Endothelial cell of umbilical vein (primary cell): ENCODE measurements at regions of chr11 and their contacts with region 1.

Region 1: GRCh38 chr11:13685461-13686108 is 17.1 kb downstream of the FAR1 start:
- DNase-seq: peak; percentile 81
- H3K4me3 ChIP-seq: peak overlapping the region in 1 of 3 experiments; percentile 1
- H3K27ac ChIP-seq: peak overlapping the region; percentile 27
- H3K4me1 ChIP-seq: peaks cover 43% of the 10 kb centered on the region
- H3K27me3 ChIP-seq: no peaks in the 10 kb centered on the region
- CTCF ChIP-seq: no peak
- POLR2A ChIP-seq: no peak

Region 2: GRCh38 chr11:13717331-13717730 is 31.7 kb after region 1 on chr11:
- CTCF ChIA-PET with region 1: interaction called, 3 read pairs
- POLR2A ChIA-PET with region 1: no interaction called
- dilution Hi-C with region 1: no loop called
- intact Hi-C with region 1: loop called (anchors 2 kb)
- DNase-seq: peak; percentile 84
- H3K4me3 ChIP-seq: no peak overlapping the region
- H3K27ac ChIP-seq: peak overlapping the region; percentile 19
- H3K4me1 ChIP-seq: peaks cover 22% of the 10 kb centered on the region
- H3K27me3 ChIP-seq: no peaks in the 10 kb centered on the region
- CTCF ChIP-seq: no peak
- POLR2A ChIP-seq: no peak